Activated CD4-positive, alpha-beta memory T cell treated with anti-CD3 and anti-CD28 coated beads, Interleukin-2, amount 10 ng/mL, durations not matched to agents 7 days and 5 days (primary cell): ENCODE measurements at regions of chr17 and their contacts with region 1.

Region 1: GRCh38 chr17:75405365-75406221 is at the start of gene GRB2:
- DNase-seq: peak; percentile 100
- H3K4me3 Mint-ChIP-seq: peak within 1 kb of the TSS; percentile 95
- H3K27ac Mint-ChIP-seq: peak within 1 kb of the TSS; percentile 96
- H3K4me1 Mint-ChIP-seq: peaks cover 47% of the 10 kb centered on the region
- H3K27me3 Mint-ChIP-seq: no peaks in the 10 kb centered on the region
- total RNA-seq, gene GRB2: 130 to 132 TPM

Region 2: GRCh38 chr17:75109407-75110233 is 296.0 kb before region 1 on chr17 and contains the start of gene ARMC7:
- CTCF ChIA-PET with region 1: no interaction called
- POLR2A ChIA-PET with region 1: no interaction called
- DNase-seq: peak; percentile 92
- H3K4me3 Mint-ChIP-seq: peak within 1 kb of the TSS; percentile 84
- H3K27ac Mint-ChIP-seq: peak within 1 kb of the TSS; percentile 79
- H3K4me1 Mint-ChIP-seq: peaks cover 41% of the 10 kb centered on the region
- H3K27me3 Mint-ChIP-seq: no peaks in the 10 kb centered on the region
- total RNA-seq, gene ARMC7: 17.1 to 17.9 TPM

Region 3: DNA sequence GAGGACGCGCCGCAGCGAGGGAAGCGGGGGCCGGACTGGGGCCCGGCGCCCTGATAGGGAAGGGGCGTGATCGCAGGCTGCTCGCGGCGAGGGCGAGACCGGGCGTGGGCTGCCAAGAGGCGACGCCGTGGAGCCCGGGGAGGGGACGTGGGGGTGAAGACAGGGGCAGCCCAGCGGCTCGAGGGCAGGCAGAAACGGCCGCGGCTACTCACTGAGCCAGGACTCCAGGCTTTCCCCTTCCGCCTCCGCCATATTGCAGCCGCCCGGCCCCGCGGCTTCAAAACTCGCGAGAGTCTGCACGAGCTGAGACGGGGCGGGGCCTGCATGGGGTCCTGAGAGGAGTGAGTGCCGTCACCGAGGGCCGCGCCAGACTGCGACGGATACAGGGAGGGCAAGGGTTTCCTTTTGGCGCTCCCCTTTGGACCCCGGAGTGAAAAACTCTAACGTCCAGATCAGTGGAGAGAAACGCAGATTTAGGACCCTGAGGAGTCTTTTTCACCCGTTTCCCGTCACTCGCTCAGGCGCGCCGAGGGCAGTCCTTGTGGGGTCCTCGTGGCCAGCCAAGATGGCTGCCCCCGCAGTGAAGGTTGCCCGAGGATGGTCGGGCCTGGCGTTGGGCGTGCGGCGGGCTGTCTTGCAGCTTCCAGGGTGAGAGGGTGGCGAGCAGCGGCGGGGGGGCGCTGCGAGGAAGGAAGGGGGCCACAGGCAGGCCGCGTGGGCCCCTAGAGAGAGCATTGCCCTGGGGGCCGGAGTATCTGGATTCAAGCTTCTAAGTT is 144.1 kb before region 1 on chr17 and contains the starts of genes GGA3 and MRPS7:
- CTCF ChIA-PET with region 1: interaction called, 3 read pairs
- POLR2A ChIA-PET with region 1: interaction called, 35 read pairs
- DNase-seq: peak; percentile 96
- H3K4me3 Mint-ChIP-seq: peak within 1 kb of the TSS; percentile 96
- H3K27ac Mint-ChIP-seq: peak within 1 kb of the TSS; percentile 99
- H3K4me1 Mint-ChIP-seq: peaks cover 53% of the 10 kb centered on the region
- H3K27me3 Mint-ChIP-seq: no peaks in the 10 kb centered on the region
- total RNA-seq, gene GGA3: 73.4 to 79.4 TPM
- total RNA-seq, gene MRPS7: 39.7 to 40.0 TPM

Region 4: DNA sequence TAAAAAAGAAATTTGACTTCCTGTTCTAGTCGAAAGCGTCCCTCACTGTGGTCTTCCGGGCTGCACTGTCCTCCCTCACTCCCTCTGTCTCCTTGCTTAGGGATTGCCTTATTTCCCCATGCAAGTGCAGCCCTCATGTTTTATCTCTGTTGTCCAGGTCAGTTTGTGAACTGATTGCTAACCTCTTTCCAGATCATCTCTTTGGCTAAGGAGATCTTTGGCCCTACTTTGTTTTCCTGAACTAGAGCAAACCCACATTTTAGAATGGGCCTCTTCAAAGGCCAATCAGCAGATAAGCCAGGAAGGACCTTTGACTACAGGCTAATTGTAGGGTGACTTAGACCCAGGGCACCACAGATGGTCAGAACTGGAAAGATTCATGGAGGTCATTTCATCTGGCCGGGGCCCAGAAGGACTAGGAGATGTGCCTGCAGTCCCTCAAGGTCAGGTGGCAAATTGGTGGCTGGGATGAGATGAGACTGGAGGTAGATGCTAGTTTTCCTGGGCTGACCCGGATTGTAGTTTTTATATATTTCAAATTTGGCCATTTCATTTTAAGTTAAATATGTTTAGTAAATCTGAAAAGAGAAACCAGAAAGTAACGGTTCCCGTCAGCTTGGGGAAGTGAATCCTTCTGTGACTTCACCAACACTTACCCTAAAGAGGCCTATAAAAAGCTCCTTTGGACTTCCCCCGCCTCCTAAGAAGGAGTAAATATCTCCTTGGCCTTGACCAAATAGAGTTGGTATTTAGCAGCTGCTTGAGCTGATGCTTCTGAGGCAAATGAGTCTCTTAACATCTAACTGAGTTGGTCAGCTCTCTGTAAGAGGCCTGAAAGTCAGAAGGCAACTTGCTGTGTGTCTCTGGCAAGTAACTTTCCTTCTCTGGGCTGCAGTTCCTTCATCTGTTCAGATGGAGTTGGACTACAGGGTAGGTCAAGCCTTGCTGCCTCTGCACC is 110.1 kb before region 1 on chr17:
- CTCF ChIA-PET with region 1: interaction called, 4 read pairs
- POLR2A ChIA-PET with region 1: interaction called, 38 read pairs
- DNase-seq: no peak
- H3K4me3 Mint-ChIP-seq: peak overlapping the region; percentile 46
- H3K27ac Mint-ChIP-seq: peak overlapping the region; percentile 87
- H3K4me1 Mint-ChIP-seq: peaks cover 36% of the 10 kb centered on the region
- H3K27me3 Mint-ChIP-seq: no peaks in the 10 kb centered on the region

Region 5: GRCh38 chr17:75319904-75320691 is 85.5 kb before region 1 on chr17:
- CTCF ChIA-PET with region 1: interaction called, 46 read pairs
- POLR2A ChIA-PET with region 1: interaction called, 24 read pairs
- DNase-seq: no peak
- H3K4me3 Mint-ChIP-seq: no peak overlapping the region
- H3K27ac Mint-ChIP-seq: no peak overlapping the region
- H3K4me1 Mint-ChIP-seq: peaks cover 22% of the 10 kb centered on the region
- H3K27me3 Mint-ChIP-seq: no peaks in the 10 kb centered on the region

Region 6: DNA sequence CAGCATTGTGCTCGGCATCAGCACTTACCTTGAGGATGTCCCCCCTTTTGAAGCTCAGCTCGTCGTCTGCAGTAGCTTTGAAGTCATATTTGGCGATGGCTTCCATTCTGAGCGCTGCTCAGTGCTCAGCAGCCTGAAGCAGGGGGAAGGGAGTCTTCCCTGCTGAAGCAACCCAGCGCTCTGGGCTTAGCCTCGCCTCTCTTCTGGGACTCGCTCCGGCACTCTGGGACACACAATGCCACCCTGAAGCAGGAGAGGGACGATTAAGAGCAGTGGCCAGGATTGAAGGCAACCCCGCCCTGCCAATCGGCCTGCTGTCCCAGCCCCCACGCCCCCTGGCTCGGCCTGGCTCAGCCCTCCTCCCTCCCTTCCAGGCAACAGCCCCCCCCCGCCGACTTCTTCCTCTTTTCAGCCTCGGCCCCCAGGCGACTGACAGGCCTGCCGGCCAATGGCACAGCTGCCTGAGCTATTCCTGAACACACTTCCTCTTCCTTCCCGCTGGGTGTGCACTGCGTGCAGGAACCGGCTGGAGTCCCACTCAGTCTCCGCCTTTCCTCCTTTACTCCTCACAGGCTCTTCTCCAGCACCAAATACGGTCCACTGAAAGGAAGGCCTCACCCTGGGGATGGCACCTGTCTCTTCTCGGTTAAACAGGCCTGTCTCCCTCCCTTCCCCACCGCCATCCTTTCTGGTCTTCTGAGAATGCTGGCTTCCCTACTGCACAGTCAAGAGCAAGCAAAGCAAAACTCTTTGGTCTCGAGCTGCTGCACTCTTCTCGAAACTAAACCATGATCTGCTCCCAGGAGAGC is 11.9 kb before region 1 on chr17:
- CTCF ChIA-PET with region 1: interaction called, 7 read pairs
- POLR2A ChIA-PET with region 1: interaction called, 29 read pairs
- DNase-seq: peak; percentile 86
- H3K4me3 Mint-ChIP-seq: peak overlapping the region; percentile 90
- H3K27ac Mint-ChIP-seq: peak overlapping the region; percentile 59
- H3K4me1 Mint-ChIP-seq: peaks cover 72% of the 10 kb centered on the region
- H3K27me3 Mint-ChIP-seq: no peaks in the 10 kb centered on the region

Region 7: GRCh38 chr17:75571197-75571873 is 165.7 kb after region 1 on chr17:
- CTCF ChIA-PET with region 1: no interaction called
- POLR2A ChIA-PET with region 1: no interaction called
- DNase-seq: no peak
- H3K4me3 Mint-ChIP-seq: no peak overlapping the region
- H3K27ac Mint-ChIP-seq: no peak overlapping the region
- H3K4me1 Mint-ChIP-seq: peaks cover 3% of the 10 kb centered on the region
- H3K27me3 Mint-ChIP-seq: no peaks in the 10 kb centered on the region